ENCODE measurements at regions of chr16 and their contacts with region 1.

Region 1: GRCh38 chr16:19717771-19718602 is at the starts of genes IQCK and KNOP1:
- DNase-seq: peak; percentile 78 to 88
- H3K4me3 ChIP-seq: peak within 1 kb of the TSS; percentile 96 to 99 (median 97)
- H3K27ac ChIP-seq: peak within 1 kb of the TSS; percentile 94
- H3K4me1 ChIP-seq: peaks cover 0 to 13% (median 5%) of the 10 kb centered on the region in 4 experiments; a peak in 5 of 7 replicates
- H3K27me3 ChIP-seq: no peaks in the 10 kb centered on the region
- CTCF ChIP-seq: no peak
- EP300 ChIP-seq: no peak
- POLR2A ChIP-seq: peak; percentile 49 to 79
- RAD21 ChIP-seq: peak in 1 of 2 experiments; percentile 0; a peak in 1 of 4 replicates
- total RNA-seq, gene IQCK: 5.8 and 6.2 TPM in 2 replicates
- total RNA-seq, gene KNOP1: 80.8 and 87.9 TPM in 2 replicates

Region 2: DNA sequence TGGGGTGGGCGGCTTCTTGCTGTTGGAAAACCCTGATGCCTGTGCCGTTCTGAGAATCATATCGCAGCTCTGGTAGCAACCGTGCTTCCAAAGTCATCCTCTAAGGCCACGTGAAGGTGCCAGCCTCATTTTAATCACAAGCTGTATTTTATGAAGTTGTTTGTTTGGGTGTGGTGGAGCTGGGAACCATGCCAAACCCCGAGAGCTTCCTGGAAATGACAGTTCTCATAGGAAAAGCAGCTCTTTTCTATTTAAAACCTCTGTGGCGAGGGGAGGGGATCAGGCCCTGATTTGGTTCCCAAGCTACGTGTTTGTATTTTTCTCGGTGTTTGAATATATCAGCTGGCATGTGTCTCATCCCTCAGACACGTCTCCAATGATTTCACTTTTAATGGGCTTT is 21.7 kb before region 1 on chr16:
- CTCF ChIA-PET with region 1: interaction called, 4 read pairs
- POLR2A ChIA-PET with region 1: interaction called, 20 read pairs
- DNase-seq: no peak
- H3K4me3 ChIP-seq: no peak overlapping the region
- H3K27ac ChIP-seq: no peak overlapping the region
- H3K4me1 ChIP-seq: no peaks in the 10 kb centered on the region
- H3K27me3 ChIP-seq: no peaks in the 10 kb centered on the region
- CTCF ChIP-seq: no peak
- EP300 ChIP-seq: no peak
- POLR2A ChIP-seq: no peak
- RAD21 ChIP-seq: no peak

Region 3: DNA sequence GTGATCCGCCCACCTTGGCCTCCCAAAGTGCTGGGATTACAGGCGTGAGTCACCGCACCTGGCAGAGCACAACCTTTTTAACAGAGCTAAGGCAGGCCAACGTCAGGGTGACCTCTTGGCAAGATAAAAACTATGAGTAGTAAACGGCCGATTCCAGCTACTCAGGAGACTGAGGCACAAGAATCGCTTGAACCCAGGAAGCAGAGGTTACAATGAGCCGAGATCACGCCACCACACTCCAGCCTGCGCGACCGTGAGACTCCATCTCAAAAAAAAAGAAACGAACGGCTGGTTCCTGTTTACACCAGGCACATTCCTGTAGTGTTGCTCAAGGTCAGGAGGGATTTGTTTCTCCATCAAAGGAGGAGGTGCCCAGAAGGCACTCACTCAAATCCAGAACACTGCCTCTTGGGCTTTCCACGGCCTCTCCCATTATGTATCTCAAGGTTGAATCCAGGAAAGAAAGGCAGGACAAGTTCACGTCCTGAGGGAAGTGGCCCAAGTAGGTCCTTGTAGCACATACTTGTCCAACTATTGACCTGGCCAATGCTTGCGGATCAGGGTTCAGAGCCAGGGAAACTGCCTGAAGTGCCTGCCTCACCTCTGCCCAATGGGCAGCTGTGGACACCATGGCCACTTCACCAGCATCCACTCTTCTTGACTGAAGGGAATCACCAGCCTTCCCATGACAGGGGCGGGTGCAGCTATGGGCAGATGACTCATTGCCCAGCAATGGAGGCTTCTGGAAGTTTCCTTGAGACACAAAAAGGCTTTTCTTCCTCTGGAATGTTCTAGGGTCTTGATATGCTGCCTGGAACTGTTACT is 13.5 kb before region 1 on chr16:
- CTCF ChIA-PET with region 1: no interaction called
- POLR2A ChIA-PET with region 1: interaction called, 23 read pairs
- DNase-seq: no peak
- H3K4me3 ChIP-seq: no peak overlapping the region
- H3K27ac ChIP-seq: no peak overlapping the region
- H3K4me1 ChIP-seq: peaks cover 3 to 19% (median 15%) of the 10 kb centered on the region in 4 experiments
- H3K27me3 ChIP-seq: no peaks in the 10 kb centered on the region
- CTCF ChIP-seq: no peak
- EP300 ChIP-seq: no peak
- POLR2A ChIP-seq: no peak
- RAD21 ChIP-seq: no peak

Region 4: GRCh38 chr16:19728636-19728965 is 10.6 kb after region 1 on chr16:
- CTCF ChIA-PET with region 1: interaction called, 3 read pairs
- POLR2A ChIA-PET with region 1: interaction called, 20 read pairs
- DNase-seq: no peak
- H3K4me3 ChIP-seq: no peak overlapping the region
- H3K27ac ChIP-seq: no peak overlapping the region
- H3K4me1 ChIP-seq: peaks cover 0 to 3% (median under 1%) of the 10 kb centered on the region in 4 experiments; a peak in 1 of 7 replicates
- H3K27me3 ChIP-seq: no peaks in the 10 kb centered on the region
- CTCF ChIP-seq: no peak
- EP300 ChIP-seq: no peak
- POLR2A ChIP-seq: no peak
- RAD21 ChIP-seq: no peak

Region 5: GRCh38 chr16:19860166-19861041 is 142.4 kb after region 1 on chr16:
- CTCF ChIA-PET with region 1: no interaction called
- POLR2A ChIA-PET with region 1: interaction called, 15 read pairs
- DNase-seq: peak in 1 of 2 experiments; percentile 78
- H3K4me3 ChIP-seq: peak overlapping the region in 3 of 4 experiments; percentile 8 to 49 (median 18); a peak in 4 of 8 replicates
- H3K27ac ChIP-seq: peak overlapping the region; percentile 83
- H3K4me1 ChIP-seq: peaks cover 18 to 47% (median 40%) of the 10 kb centered on the region in 4 experiments
- H3K27me3 ChIP-seq: no peaks in the 10 kb centered on the region
- CTCF ChIP-seq: no peak
- EP300 ChIP-seq: no peak
- POLR2A ChIP-seq: no peak; a peak in 1 of 3 replicates
- RAD21 ChIP-seq: no peak

Region 6: GRCh38 chr16:19879241-19879792 is 161.3 kb after region 1 on chr16:
- CTCF ChIA-PET with region 1: interaction called, 6 read pairs
- POLR2A ChIA-PET with region 1: interaction called, 11 read pairs
- DNase-seq: peak; percentile 34 to 56
- H3K4me3 ChIP-seq: no peak overlapping the region; a peak in 1 of 8 replicates
- H3K27ac ChIP-seq: peak overlapping the region; percentile 55; the same call in 1 of the 2 replicates
- H3K4me1 ChIP-seq: peaks cover 9 to 45% (median 29%) of the 10 kb centered on the region in 4 experiments
- H3K27me3 ChIP-seq: no peaks in the 10 kb centered on the region
- CTCF ChIP-seq: peak in 2 of 3 experiments; percentile 32 to 48; a peak in 2 of 4 replicates
- EP300 ChIP-seq: no peak
- POLR2A ChIP-seq: 0 out of 3 replicates have a peak, but pooled peaks of 1 of the 2 experiments have one; percentile 23
- RAD21 ChIP-seq: peak; percentile 17 to 47; a peak in 3 of 4 replicates

Region 7: DNA sequence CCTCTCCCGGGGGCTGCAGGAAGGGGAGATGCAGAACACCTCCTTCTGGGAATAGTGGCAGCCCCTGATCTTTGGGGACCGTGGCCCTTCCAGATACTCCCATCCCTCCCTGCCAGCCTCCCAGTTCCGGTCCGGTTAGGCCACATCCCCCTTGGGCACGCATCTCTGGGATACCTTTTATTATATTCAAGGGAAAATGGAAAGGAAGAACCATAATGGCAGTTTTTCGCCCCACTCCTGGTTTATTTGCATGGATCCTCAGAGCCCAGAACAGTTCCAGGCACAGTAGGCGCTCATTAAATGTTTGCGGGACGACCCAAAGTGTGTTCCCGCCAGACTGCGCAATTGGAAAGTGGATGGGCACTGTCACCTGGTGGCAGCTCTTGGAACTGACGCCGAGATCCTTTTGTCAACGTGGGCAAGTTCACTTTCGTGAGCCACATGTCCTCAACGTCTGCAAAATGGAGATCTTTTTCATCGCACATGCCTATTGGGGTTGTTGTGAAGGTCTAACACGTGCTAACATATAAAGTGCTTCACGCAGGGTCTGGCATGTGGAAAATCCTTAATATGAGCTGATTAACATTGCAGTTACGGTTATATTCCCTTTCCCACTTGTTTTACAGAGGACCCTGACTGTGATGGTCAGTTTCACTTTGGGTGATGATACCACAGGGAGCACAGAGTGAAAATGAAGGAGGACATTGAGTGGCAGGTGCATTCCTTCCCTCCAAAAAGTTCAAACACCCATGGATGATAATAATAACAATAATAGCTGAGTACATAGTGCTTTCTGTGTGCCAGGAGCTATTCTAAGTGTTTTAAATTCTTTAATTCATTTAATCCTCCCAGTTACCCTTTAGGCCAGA is 168.3 kb after region 1 on chr16:
- CTCF ChIA-PET with region 1: interaction called, 6 read pairs
- POLR2A ChIA-PET with region 1: interaction called, 11 read pairs
- DNase-seq: peak; percentile 68 to 94
- H3K4me3 ChIP-seq: no peak overlapping the region
- H3K27ac ChIP-seq: no peak overlapping the region
- H3K4me1 ChIP-seq: peaks cover 0 to 12% (median 10%) of the 10 kb centered on the region in 4 experiments; a peak in 6 of 7 replicates
- H3K27me3 ChIP-seq: peaks cover 0 to 11% (median 7%) of the 10 kb centered on the region in 4 experiments; a peak in 5 of 7 replicates
- CTCF ChIP-seq: peak; percentile 91 to 100 (median 100)
- EP300 ChIP-seq: no peak
- POLR2A ChIP-seq: no peak
- RAD21 ChIP-seq: peak; percentile 100

Region 8: DNA sequence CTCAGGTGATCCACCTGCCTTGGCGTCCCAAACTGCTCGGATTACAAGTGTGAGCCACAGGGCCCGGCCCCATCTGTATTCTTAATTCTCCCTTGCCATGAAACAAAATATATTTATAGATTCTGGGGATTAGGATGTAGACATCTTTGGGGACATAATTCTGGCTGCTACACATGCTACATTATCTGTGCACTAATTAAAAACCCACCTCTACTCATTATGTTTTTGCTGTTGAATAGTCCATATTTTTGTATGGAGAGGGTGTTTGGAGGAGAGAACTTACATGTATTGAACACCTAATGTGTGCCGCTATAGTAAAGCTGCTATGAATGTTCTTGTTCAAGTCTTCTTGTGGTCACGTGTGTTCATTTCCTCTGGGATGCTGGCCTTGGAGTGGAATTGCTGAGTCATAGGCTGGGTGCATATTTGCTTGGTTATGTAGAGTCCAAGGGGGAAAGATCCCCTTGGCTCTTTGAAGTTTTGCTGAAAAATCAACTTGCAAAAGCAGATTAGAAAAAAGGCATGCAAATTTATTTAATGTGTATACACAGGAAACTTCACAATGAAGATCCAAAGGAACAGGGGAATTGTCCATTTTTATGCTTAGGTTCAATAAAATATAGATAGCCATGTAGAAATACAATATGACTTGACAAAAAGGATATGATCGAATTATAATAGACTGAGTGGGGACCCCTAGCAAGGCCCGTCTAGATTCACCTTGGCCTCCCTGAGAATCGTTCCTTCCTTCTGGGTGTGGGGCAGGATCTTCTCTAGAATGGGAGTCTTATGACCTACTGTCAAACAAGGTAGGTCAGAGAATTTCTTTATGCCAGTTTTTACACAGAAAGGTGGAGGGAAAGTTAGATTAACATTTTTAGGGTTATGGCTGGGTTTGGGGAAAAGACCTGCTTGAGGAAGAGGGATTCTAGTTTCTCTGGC is 208.7 kb after region 1 on chr16:
- CTCF ChIA-PET with region 1: no interaction called
- POLR2A ChIA-PET with region 1: no interaction called
- DNase-seq: no peak
- H3K4me3 ChIP-seq: no peak overlapping the region
- H3K27ac ChIP-seq: no peak overlapping the region
- H3K4me1 ChIP-seq: peaks cover 0 to 3% (median under 1%) of the 10 kb centered on the region in 4 experiments; a peak in 3 of 7 replicates
- H3K27me3 ChIP-seq: no peaks in the 10 kb centered on the region
- CTCF ChIP-seq: no peak
- EP300 ChIP-seq: no peak
- POLR2A ChIP-seq: no peak
- RAD21 ChIP-seq: no peak

Measured in H1 (cell line).